GM10248 (cell line): ENCODE measurements at regions of chr12 and their contacts with region 1.

Region 1: DNA sequence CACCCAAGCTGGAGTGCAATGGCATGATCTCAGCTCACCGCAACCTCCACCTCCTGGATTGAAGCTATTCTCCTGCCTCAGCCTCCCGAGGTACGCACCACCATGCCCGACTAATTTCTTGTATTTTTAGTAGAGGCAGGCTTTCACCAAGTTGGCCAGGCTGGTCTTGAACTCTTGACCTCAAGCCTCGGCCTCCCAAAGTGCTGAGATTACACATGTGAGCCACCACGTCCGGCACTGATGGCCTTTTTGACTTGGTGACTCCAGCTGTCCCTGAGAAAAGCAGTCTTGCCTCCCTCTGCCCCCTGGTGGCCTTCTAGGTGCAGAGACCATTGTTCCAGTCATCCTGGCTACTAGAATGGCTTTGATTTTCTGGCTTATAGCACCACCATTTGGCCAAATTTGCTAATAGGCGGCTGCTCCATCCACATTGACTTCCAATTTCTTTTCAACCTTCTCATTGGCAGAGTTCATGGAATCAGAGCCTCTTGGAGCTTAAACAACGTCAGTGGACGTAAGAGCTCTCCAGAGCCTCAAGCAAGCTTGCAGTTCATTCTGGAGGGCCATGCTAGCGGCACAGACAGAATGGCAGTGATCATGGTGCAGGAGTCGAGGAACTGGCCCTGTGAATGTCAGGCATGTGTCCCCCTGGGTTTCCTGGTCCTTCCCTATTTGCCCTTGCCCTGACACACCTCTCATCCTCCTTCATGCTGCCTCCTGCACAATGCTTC is 25.4 kb upstream of the EIF4B start:
- DNase-seq: peak; percentile 84
- CTCF ChIP-seq: peak; percentile 98

Region 2: GRCh38 chr12:52870351-52871290 is 110.2 kb before region 1 on chr12:
- CTCF ChIA-PET with region 1: interaction called, 435 read pairs
- POLR2A ChIA-PET with region 1: no interaction called
- DNase-seq: peak; percentile 79
- CTCF ChIP-seq: peak; percentile 63

Region 3: DNA sequence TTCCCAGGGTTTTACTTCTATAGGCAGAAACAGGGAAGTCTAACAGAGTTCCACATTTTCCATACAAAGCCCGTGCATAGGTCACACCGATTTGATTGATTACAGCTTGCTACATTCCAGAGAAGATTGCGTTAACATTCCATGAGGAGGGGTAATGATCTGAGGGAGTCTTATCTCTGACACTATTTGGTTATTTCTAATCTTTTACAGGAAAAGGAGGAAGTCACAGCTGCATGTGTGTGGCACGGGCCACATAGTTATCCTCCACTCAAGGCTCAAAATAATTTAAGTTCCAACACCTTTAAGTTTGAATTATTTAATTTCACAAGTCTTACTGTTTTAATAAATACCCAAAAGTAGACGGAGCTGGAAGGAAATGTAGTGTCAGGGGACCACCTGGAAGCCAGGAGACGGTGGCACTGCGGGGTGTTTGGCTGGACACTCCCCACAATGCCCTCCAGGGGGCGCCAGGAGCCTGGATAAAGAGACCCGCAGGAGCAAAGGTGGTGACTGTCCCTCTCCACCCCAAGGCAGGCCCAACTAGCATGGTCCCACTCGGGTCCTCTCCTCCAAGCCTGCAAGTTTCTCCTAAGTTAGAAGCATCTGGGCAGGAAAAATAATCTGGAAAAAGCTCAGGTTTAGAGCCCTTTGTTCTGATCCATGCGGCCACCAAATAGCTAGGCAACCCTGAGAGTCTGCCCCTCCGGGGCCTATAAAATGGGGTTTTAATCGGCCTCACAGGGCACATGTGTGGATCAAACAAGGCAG is 96.1 kb before region 1 on chr12:
- CTCF ChIA-PET with region 1: interaction called, 435 read pairs
- POLR2A ChIA-PET with region 1: no interaction called
- DNase-seq: peak; percentile 83
- CTCF ChIP-seq: peak; percentile 82

Region 4: GRCh38 chr12:52942066-52942900 is 38.6 kb before region 1 on chr12:
- CTCF ChIA-PET with region 1: interaction called, 13 read pairs
- POLR2A ChIA-PET with region 1: no interaction called
- DNase-seq: no peak
- CTCF ChIP-seq: no peak

Region 5: DNA sequence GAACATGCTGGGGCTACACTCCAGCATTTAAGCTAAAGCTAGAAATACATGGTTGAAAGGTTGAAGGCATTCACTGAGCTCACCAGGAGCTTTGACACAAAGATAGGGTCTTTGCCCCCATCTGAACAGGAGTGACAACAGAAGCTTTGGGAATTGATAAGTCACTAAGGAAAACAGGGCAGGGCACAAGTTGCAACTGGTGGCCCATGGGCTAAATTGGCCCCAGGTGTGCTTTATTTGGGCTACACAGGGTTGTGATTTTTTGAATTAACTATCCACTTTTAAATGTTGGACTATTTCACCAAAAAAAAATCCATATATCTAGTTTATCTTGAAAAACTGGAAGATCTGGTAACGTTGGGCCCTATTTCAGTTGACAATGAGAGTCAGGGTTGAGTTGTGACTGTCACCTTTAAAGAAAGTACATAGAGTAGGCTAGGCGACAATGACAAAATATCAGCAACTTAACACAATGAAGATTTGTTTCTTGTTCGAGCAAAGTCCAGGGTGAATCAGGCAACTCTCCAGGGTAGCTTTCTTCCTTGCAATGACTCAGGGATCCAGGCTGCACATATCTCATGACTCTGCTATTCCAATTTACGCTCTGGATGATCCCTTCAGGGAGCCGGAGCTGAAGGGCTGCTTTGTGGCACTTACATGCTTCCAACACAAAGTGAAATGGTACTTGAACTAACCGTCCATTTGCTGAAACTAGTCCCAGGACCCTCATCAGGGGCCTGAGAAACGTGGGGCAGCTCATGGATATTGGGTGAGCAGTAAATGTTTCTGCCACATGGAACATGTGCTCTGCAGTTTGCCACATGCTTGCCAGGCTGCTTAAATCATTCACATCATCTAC is 12.1 kb after region 1 on chr12:
- CTCF ChIA-PET with region 1: interaction called, 22 read pairs
- POLR2A ChIA-PET with region 1: no interaction called
- DNase-seq: no peak
- CTCF ChIP-seq: no peak

Region 6: GRCh38 chr12:53093777-53094393 is 113.0 kb after region 1 on chr12:
- CTCF ChIA-PET with region 1: no interaction called
- POLR2A ChIA-PET with region 1: no interaction called
- DNase-seq: no peak
- CTCF ChIP-seq: no peak